Dendritic cell treated with granulocyte-macrophage colony-stimulating factor and Interleukin-4, amounts not matched to agents 40 ng/mL and 50 ng/mL, for 4 days (primary cell): ENCODE measurements at regions of chr17 and their contacts with region 1.

Region 1: DNA sequence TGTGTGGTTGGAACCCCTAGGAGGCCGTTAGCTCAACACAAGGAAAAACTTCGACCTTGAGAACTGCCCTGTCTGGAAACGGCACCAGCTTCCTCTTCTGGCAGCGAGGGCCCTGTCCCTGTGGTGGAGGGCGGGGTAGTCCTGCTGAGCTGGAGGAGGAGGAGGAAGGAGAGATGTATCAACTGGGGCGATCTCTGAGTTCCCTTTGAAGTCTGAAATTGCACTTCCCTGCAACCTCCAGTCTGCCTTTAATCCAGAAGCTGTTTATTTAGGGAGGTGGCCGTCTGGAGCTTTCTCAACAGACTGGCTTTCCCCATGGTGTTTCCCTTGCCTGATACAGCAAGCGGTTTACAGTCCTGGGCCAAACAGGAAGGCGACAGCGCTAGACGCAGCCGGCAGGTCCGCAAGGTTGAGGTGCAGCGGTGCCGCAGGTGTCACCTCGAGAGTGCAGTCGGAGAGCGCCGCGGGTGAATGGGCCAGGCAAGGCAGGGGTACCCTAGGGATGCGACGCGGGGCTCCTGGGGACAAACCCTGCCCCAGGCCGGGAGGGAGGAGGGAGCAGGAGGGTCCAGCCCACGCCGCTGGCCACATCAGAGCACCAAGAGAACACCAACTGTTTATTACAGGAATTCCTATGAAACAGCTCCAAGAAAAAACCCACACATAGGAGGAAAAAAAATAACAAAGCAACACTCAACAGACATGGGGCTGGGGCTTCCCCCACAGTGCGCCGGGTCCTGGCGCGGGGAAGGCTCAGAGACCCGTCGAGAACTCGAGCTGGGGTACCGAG is 11.4 kb upstream of the MRPS23 start:
- H3K4me3 Mint-ChIP-seq: peak overlapping the region; percentile 84
- H3K27ac Mint-ChIP-seq: peak overlapping the region; percentile 97
- H3K4me1 Mint-ChIP-seq: peaks cover 44% of the 10 kb centered on the region
- H3K27me3 Mint-ChIP-seq: peaks cover 25% of the 10 kb centered on the region

Region 2: GRCh38 chr17:57849874-57850754 is 11.1 kb before region 1 on chr17 and contains the start of gene MRPS23:
- intact Hi-C with region 1: loop called (anchors 1 kb)
- H3K4me3 Mint-ChIP-seq: peak within 1 kb of the TSS; percentile 90
- H3K27ac Mint-ChIP-seq: peak within 1 kb of the TSS; percentile 98
- H3K4me1 Mint-ChIP-seq: peaks cover 49% of the 10 kb centered on the region
- H3K27me3 Mint-ChIP-seq: no peaks in the 10 kb centered on the region

Region 3: DNA sequence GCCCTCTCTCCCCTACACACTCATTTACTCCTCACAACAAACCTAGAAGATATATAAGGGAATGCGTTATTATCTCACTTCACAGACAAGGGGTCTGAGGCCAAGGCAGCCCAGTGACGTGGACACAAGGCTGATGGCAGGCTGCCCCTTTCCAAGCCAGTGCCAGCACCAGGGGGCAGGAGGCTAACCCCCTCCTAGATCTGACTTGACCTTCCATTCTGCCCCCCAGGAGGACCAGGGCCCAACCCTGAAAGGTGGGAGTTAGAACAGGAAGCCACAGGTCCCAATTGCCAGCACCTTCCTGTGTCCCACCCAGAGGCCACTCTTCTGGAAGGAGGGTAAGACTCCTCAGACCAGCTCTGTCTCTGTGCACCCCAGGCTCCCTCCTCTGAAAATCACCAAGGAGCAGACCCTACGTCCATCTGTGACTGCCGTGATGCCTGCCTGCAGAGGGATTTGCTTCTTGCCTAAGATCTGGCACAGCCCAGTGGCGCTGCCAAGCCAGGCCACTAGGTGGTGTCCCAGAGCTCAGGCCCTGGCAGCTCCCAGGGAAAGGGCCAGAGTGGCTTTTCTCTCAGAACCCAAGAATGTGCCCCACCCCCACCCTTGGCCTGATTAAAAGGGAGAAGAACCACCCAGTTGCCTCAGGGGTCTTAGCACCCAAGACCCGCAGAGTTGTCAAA is 31.1 kb after region 1 on chr17:
- intact Hi-C with region 1: no loop called
- H3K4me3 Mint-ChIP-seq: peak overlapping the region; percentile 80
- H3K27ac Mint-ChIP-seq: peak overlapping the region; percentile 94
- H3K4me1 Mint-ChIP-seq: peaks cover 61% of the 10 kb centered on the region
- H3K27me3 Mint-ChIP-seq: no peaks in the 10 kb centered on the region

Region 4: DNA sequence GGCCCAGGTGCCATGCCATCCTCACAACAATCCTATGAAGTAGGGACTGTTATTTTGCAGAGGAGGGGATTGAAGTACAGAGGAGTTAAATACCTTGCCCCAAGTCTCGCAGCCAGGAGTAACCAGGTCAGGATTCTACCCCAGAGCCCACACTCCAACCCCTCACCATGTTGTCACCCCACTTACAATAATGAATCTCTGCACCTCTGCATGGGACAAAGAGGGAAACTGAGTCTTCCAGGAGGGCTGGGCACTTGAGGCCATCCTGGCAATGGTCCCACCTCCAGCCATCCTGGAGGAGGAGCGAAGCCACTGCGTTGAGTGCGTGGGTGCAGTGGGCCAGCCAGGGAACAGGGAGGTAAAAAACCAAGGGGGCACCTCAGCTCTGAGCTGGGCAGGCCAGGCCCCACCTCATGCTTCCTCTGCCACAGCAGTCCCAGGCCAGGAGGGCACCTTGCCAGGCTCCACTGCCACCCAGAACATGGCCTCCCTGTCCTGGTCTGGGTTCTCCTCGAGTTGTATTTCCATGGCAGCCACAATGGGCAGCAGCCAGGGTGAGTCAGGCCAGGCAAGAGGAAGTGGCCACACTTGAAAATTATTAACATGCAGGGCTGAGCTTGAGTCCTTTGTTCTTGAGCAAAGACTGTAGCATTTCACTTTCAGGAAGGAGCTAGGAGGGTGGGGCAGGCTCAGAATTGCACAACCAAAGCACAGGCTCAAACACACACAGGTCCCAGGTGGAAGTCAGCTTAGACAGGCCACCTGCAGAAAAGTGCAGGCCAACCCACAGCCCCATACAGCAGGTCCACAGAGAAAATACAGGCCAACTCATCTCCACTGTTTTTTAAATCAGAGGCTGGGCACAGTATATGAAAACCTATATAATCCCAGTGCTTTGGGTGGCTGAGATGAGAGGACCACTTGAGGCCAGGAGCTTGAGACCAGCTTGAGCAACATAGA is 41.9 kb after region 1 on chr17:
- intact Hi-C with region 1: no loop called
- H3K4me3 Mint-ChIP-seq: peak overlapping the region; percentile 13
- H3K27ac Mint-ChIP-seq: peak overlapping the region; percentile 97
- H3K4me1 Mint-ChIP-seq: peaks cover 90% of the 10 kb centered on the region
- H3K27me3 Mint-ChIP-seq: no peaks in the 10 kb centered on the region

Region 5: DNA sequence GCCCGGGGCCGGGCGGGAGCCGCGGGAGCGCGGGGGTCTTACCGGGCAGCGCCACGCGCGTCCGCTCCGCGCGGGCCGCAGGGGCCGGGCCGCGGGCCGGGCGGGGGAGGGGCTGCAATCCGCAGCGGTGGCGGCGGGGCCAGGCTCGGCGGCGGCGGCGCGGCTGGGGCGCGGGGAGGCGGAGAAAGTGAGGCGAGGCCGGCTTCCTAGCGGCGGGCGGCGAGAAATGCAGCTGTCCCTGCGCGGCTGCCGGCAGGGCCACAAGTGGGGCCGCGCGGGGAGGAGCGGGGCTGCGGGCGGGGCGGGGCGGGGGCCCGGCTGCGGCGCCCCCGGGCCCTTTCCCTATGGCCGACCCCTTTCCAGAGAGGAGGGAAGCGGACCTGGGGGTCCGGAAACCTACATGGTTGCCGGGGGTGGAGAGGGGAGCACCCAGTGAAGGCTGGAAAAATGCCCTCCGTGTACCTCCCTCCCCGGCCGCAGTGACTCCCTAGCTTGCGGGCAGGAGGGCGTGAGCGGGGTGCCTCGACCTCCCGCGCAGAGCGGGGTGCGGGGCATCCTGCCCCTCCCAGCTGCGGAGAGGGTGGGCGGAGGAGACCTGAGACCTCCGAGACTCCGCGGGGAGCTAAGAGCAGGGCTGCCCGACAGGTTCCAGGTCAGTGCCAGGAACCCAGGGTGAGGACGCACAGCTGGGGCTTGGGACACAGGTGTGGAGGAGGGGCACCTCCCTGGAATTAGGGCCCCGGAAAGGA is 94.2 kb after region 1 on chr17 and contains the start of gene CUEDC1:
- intact Hi-C with region 1: no loop called
- H3K4me3 Mint-ChIP-seq: peak within 1 kb of the TSS; percentile 77
- H3K27ac Mint-ChIP-seq: peak within 1 kb of the TSS; percentile 97
- H3K4me1 Mint-ChIP-seq: peaks cover 64% of the 10 kb centered on the region
- H3K27me3 Mint-ChIP-seq: peaks cover 36% of the 10 kb centered on the region

Region 6: DNA sequence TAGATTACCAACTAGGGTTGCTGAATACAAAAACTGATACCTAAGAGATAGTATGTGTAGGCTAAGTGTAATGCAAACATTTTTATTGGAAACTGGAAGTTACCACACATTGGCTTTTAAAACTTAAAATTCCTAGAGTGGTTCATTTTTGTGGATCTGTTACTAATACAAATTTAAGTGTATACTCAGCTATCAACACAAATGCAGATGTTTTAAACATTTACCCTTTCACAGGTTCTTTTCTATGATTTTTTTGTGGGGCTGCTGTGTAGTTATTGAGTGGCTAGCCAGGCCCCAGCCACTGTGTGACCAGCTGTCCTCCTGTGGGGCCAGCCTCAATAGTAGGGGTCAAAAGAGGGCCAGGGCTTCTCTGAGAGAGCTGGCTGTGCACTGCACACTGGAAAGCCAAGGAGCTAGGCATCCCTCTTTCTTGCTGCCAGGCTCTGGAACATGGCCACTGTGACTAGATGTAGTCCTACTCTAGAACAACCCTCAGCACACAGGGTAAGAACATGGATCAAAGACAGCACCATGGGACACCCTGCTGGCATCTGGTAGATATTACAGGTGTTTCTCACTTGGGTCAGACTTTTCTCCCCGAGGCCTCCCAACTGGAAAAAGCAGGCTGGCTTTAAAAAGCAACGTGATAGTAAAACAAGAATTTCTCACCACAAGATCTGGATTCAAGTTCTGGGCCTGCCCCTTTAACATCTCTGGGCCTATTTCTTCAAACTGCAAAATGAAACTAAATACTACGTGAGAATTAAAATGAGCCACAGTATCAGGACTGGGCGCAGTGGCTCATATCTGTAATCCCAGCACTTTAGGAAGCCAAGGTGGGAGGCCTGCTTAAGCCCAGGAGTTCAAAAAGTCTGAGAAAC is 134.1 kb after region 1 on chr17:
- intact Hi-C with region 1: loop called (anchors 1 kb)
- H3K4me3 Mint-ChIP-seq: no peak overlapping the region
- H3K27ac Mint-ChIP-seq: no peak overlapping the region
- H3K4me1 Mint-ChIP-seq: peaks cover 17% of the 10 kb centered on the region
- H3K27me3 Mint-ChIP-seq: no peaks in the 10 kb centered on the region